Heart right ventricle (tissue), 16 donors: ENCODE measurements at regions of chr2 and their contacts with region 1.

Region 1: GRCh38 chr2:1950474-1950873 is 206.2 kb upstream of the PXDN start:
- DNase-seq: no peak
- ATAC-seq: no peak
- H3K4me3 ChIP-seq: no peak overlapping the region
- H3K27ac ChIP-seq: no peak overlapping the region
- H3K4me1 ChIP-seq: no peaks in the 10 kb centered on the region
- H3K27me3 ChIP-seq: peaks cover 0 to 10% (median 0%) of the 10 kb centered on the region in 7 donors
- CTCF ChIP-seq: no peak

Region 2: DNA sequence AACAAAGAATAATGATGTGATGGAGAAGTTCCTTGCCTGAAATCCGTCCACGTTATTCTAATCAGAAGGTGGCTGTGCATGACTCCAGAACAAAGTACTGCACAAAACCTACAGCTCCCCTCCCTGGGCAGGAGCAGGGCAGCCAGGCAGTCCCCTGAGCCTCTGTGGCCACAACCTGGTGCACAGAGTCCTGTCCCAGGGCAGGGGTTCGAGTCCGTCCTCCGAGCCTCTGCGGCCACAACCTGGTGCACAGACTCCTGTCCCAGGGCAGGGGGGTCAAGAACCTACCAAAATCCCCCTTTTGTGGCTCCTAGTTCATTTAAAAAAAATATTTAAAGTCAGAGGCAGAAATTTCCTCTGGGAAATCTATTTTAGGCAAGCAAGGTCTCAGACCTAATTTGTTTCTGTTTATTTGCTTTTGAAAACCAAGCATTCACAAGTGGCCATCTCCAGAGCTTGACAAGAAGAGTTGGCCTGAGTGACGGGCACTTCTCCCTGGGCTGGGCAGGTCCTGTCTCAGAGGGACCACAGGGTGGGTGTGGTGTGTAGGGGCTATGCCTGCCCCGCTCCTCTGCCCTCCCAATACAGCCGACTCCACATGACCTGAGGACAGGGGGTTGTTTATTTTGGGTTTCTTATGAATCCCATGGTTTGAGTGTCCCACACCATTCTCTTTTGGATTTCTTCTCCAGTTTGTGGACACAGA is 49.7 kb after region 1 on chr2:
- intact Hi-C with region 1: loop called in 1 of 10 experiments (anchors 5 kb)
- DNase-seq: no peak
- ATAC-seq: peak in 1 of 8 donors; percentile 25
- H3K4me3 ChIP-seq: no peak overlapping the region
- H3K27ac ChIP-seq: no peak overlapping the region
- H3K4me1 ChIP-seq: no peaks in the 10 kb centered on the region
- H3K27me3 ChIP-seq: peaks cover 0 to 15% (median 4%) of the 10 kb centered on the region in 7 donors
- CTCF ChIP-seq: no peak